ENCODE measurements at regions of chrX and their contacts with region 1.

Region 1: GRCh38 chrX:110167952-110168451 is 149.9 kb downstream of the AMMECR1 start:
- DNase-seq: peak in 1 of 2 experiments; percentile 75
- H3K4me3 ChIP-seq: no peak overlapping the region
- H3K27ac ChIP-seq: no peak overlapping the region
- H3K4me1 ChIP-seq: 0 out of 7 replicates have a peak, but pooled peaks cover 0 to 3% (median 0%) of the 10 kb centered on the region in 4 experiments
- H3K27me3 ChIP-seq: no peaks in the 10 kb centered on the region
- CTCF ChIP-seq: peak; percentile 67 to 76 (median 72)
- EP300 ChIP-seq: no peak
- POLR2A ChIP-seq: no peak
- RAD21 ChIP-seq: peak; percentile 45 to 65; a peak in 3 of 4 replicates

Region 2: GRCh38 chrX:110097920-110098319 is 70.1 kb before region 1 on chrX:
- CTCF ChIA-PET with region 1: no interaction called
- POLR2A ChIA-PET with region 1: no interaction called
- DNase-seq: no peak
- H3K4me3 ChIP-seq: no peak overlapping the region
- H3K27ac ChIP-seq: no peak overlapping the region
- H3K4me1 ChIP-seq: no peaks in the 10 kb centered on the region
- H3K27me3 ChIP-seq: no peaks in the 10 kb centered on the region
- CTCF ChIP-seq: no peak
- EP300 ChIP-seq: no peak
- POLR2A ChIP-seq: no peak
- RAD21 ChIP-seq: no peak

Region 3: GRCh38 chrX:110156167-110156754 is 11.7 kb before region 1 on chrX:
- CTCF ChIA-PET with region 1: interaction called, 24 read pairs
- POLR2A ChIA-PET with region 1: no interaction called
- DNase-seq: no peak
- H3K4me3 ChIP-seq: no peak overlapping the region
- H3K27ac ChIP-seq: no peak overlapping the region
- H3K4me1 ChIP-seq: peaks cover 0 to 6% (median under 1%) of the 10 kb centered on the region in 4 experiments; a peak in 3 of 7 replicates
- H3K27me3 ChIP-seq: no peaks in the 10 kb centered on the region
- CTCF ChIP-seq: peak in 2 of 3 experiments; percentile 2 to 6; a peak in 2 of 4 replicates
- EP300 ChIP-seq: no peak
- POLR2A ChIP-seq: no peak
- RAD21 ChIP-seq: no peak

Region 4: DNA sequence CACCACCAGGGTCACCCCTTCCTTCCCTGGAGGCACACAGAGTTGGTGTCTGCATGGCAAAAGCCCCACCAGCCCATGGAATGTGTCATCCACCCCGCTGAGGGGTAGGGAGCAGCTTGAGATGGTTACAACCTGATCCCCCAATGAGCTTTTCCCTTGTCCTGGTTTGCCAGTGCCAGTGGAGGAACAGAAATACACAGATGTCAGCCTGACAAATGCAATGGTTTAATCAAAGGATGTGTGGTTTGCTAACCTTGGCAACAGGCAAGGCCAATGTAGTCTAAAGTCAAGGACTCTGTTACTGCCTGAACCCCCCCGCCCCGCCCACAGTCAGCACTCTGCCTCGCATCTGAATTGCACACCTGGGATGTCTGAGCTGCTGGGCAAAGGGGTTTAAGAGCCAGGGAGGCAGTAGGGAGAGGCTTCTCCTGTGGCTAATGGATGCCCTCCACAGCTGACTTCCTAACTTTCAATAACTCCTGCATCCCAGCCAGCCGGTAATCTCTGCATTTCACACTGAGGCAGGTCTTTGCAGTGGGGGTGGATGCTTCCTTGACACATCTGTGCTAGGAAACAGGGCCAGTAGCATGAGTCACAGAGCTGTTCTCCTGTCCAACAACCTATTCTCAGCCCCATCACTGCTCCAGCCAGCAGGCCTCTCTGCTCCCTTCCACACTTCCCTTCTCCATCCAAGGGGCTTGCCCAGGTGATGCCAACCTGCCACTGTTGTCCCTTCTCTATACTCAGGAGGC is 12.3 kb after region 1 on chrX:
- CTCF ChIA-PET with region 1: interaction called, 18 read pairs
- POLR2A ChIA-PET with region 1: interaction called, 3 read pairs
- DNase-seq: no peak
- H3K4me3 ChIP-seq: no peak overlapping the region
- H3K27ac ChIP-seq: no peak overlapping the region
- H3K4me1 ChIP-seq: no peaks in the 10 kb centered on the region; a peak in 2 of 7 replicates
- H3K27me3 ChIP-seq: no peaks in the 10 kb centered on the region
- CTCF ChIP-seq: no peak
- EP300 ChIP-seq: no peak
- POLR2A ChIP-seq: no peak
- RAD21 ChIP-seq: no peak

Region 5: GRCh38 chrX:110412971-110413721 is 245.1 kb after region 1 on chrX:
- CTCF ChIA-PET with region 1: interaction called, 742 read pairs
- POLR2A ChIA-PET with region 1: interaction called, 3 read pairs
- DNase-seq: peak in 1 of 2 experiments; percentile 75
- H3K4me3 ChIP-seq: peak overlapping the region in 2 of 4 experiments; percentile 19 to 36; a peak in 3 of 8 replicates
- H3K27ac ChIP-seq: no peak overlapping the region
- H3K4me1 ChIP-seq: peaks cover 0 to 2% (median under 1%) of the 10 kb centered on the region in 4 experiments; a peak in 1 of 7 replicates
- H3K27me3 ChIP-seq: no peaks in the 10 kb centered on the region
- CTCF ChIP-seq: peak; percentile 78 to 82 (median 81)
- EP300 ChIP-seq: no peak
- POLR2A ChIP-seq: no peak
- RAD21 ChIP-seq: peak; percentile 74 to 84

Measured in H1 (cell line).